ENCODE measurements at regions of chr19 and their contacts with region 1.

Region 1: DNA sequence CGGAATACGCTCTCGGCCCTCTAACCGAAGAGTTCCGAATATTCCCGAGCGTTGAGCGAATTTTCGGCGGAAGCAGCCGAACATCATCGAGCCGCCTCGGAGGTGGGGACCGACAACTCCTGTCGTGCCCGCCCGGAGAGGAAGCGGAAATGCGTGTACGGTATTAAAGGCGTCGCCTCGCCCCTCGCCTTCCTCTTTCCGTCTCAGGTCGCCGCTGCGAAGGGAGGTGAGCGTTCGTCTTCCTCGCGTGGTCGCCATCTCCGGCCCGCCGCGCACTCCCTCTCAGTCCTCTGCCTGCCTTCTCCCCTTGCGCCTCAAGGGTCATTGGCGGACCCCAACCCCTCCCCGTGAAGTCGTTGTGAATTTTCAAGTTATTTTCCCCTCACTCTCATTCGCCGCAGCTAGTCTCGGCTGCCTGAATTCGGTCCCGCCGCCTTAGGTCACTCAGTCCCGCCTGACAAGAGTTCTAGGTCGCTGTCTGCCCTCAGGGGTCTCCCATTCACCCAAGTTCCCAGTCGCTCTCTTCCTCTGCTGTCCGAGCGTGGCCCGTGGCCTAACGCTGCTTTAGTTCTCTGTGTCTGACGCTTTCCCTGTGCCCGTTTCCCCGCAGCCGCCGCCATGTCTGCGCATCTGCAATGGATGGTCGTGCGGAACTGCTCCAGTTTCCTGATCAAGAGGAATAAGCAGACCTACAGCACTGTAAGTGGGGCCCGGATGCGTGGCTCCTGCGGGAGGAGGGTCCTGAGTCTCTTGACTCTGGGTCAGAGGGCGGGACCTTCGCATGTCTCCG is at the start of gene RPL28:
- DNase-seq: peak; percentile 98 to 99
- ATAC-seq: peak; percentile 79 to 93 (median 84)
- H3K4me3 ChIP-seq: peak within 1 kb of the TSS; percentile 72
- H3K4me3 Mint-ChIP-seq: peak within 1 kb of the TSS; percentile 97
- H3K27ac ChIP-seq: peak within 1 kb of the TSS; percentile 94
- H3K27ac Mint-ChIP-seq: peak within 1 kb of the TSS; percentile 94 to 100
- H3K4me1 ChIP-seq: peaks cover 63% of the 10 kb centered on the region
- H3K4me1 Mint-ChIP-seq: peaks cover 54 to 79% of the 10 kb centered on the region in 2 donors
- H3K27me3 ChIP-seq: no peaks in the 10 kb centered on the region
- H3K27me3 Mint-ChIP-seq: no peaks in the 10 kb centered on the region
- CTCF ChIP-seq: no peak
- total RNA-seq, gene RPL28: 1,373 to 1,704 (median 1,679) TPM

Region 2: GRCh38 chr19:55228015-55228391 is 157.9 kb before region 1 on chr19:
- intact Hi-C with region 1: no loop called
- DNase-seq: no peak
- ATAC-seq: no peak
- H3K4me3 ChIP-seq: no peak overlapping the region
- H3K4me3 Mint-ChIP-seq: no peak overlapping the region
- H3K27ac ChIP-seq: no peak overlapping the region
- H3K27ac Mint-ChIP-seq: peak overlapping the region; percentile 29 to 65
- H3K4me1 ChIP-seq: no peaks in the 10 kb centered on the region
- H3K4me1 Mint-ChIP-seq: peaks cover 0 to 11% of the 10 kb centered on the region in 2 donors
- H3K27me3 ChIP-seq: no peaks in the 10 kb centered on the region
- H3K27me3 Mint-ChIP-seq: no peaks in the 10 kb centered on the region
- CTCF ChIP-seq: no peak

Region 3: DNA sequence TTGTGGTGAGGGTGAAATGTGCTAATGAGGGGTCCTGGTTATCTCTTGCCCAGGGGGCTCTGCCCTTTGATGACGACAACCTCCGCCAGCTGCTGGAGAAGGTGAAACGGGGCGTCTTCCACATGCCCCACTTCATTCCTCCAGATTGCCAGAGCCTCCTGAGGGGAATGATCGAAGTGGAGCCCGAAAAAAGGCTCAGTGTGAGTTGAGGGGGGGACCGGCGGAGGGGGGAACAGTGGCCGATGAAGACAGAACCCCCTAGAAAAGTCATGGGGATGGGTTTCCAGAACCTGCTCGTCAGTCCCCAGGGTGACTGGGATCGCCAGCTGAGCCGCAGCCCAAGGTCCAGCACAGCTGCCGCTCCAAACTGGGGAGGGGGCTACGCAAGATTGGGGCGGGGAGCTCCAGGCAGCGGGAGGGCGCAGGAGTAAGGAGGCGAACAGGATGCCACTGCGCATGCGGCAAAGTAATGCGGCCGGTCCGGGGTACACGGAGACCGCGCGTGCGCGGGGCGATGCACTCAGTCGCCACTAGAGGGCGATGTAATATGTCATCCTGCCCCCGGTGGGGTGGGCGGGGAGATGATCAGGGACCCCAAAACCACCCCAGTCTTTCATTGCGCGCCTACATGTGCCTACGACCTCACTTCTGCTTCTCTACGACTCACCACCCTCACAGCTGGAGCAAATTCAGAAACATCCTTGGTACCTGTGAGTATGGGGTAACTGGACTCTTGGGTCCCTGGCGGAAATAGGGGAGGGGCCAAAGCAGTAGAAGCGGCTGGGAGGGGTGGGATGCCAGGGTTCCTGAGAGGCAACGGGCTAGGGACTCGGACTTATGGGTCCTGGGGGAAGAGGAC is 84.2 kb before region 1 on chr19:
- intact Hi-C with region 1: loop called (anchors 2 kb)
- DNase-seq: peak; percentile 96
- ATAC-seq: peak; percentile 93 to 95 (median 94)
- H3K4me3 ChIP-seq: peak overlapping the region; percentile 35
- H3K4me3 Mint-ChIP-seq: peak overlapping the region; percentile 84
- H3K27ac ChIP-seq: peak overlapping the region; percentile 46
- H3K27ac Mint-ChIP-seq: peak overlapping the region; percentile 75 to 92
- H3K4me1 ChIP-seq: peaks cover 15% of the 10 kb centered on the region
- H3K4me1 Mint-ChIP-seq: peaks cover 0 to 13% of the 10 kb centered on the region in 2 donors
- H3K27me3 ChIP-seq: no peaks in the 10 kb centered on the region
- H3K27me3 Mint-ChIP-seq: no peaks in the 10 kb centered on the region
- CTCF ChIP-seq: peak; percentile 90

Region 4: DNA sequence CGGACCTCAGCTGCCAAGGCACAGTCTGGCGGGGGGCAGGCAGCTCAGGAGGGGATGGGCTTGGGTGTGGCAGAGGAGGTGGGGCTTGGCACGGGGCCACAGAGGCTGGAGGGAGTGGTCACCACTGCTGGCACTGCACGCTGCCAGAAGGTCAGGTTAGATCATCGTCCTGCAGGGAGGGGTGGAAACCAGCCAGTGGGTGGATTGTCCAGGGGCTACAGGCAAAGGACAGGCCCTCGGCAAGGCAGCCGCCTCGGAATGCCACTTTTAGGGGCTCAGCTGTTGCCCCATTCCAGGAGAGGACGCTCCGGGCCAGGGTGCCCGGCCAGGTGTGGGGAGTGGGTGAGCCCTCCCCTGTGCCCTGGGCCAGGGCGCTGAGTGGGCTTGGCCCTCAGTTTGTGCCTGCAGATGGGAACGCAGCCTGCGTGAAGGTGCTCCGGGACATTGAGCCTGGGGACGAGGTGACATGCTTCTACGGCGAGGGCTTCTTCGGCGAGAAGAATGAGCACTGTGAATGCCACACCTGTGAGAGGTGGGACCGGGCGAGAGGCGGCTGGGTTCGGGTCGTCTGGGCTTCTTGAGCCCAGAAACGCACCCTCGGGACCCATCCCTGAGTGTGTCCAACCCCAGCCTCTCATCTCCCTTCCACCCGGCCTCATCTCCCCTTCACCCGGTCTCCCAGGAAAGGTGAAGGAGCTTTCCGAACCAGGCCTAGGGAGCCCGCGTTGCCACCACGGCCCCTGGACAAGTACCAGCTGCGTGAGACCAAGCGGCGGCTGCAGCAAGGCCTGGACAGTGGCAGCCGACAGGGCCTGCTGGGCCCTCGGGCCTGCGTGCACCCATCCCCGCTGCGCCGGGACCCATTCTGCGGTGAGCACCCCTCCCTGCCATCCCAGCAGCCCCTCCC is 39.9 kb before region 1 on chr19:
- intact Hi-C with region 1: no loop called
- DNase-seq: no peak
- ATAC-seq: no peak
- H3K4me3 ChIP-seq: no peak overlapping the region
- H3K4me3 Mint-ChIP-seq: no peak overlapping the region
- H3K27ac ChIP-seq: no peak overlapping the region
- H3K27ac Mint-ChIP-seq: peak overlapping the region in 1 of 2 donors; percentile 2
- H3K4me1 ChIP-seq: peaks cover 7% of the 10 kb centered on the region
- H3K4me1 Mint-ChIP-seq: peaks cover 6 to 16% of the 10 kb centered on the region in 2 donors
- H3K27me3 ChIP-seq: no peaks in the 10 kb centered on the region
- H3K27me3 Mint-ChIP-seq: peaks cover under 1 to 2% of the 10 kb centered on the region in 2 donors
- CTCF ChIP-seq: no peak

Region 5: GRCh38 chr19:55407800-55408532 is 22.0 kb after region 1 on chr19:
- intact Hi-C with region 1: loop called (anchors 2 kb)
- DNase-seq: peak; percentile 96 to 99
- ATAC-seq: peak; percentile 85 to 93 (median 88)
- H3K4me3 ChIP-seq: peak overlapping the region; percentile 57
- H3K4me3 Mint-ChIP-seq: peak overlapping the region; percentile 98
- H3K27ac ChIP-seq: peak overlapping the region; percentile 99
- H3K27ac Mint-ChIP-seq: peak overlapping the region; percentile 99 to 100
- H3K4me1 ChIP-seq: peaks cover 24% of the 10 kb centered on the region
- H3K4me1 Mint-ChIP-seq: peaks cover 29 to 33% of the 10 kb centered on the region in 2 donors
- H3K27me3 ChIP-seq: no peaks in the 10 kb centered on the region
- H3K27me3 Mint-ChIP-seq: no peaks in the 10 kb centered on the region
- CTCF ChIP-seq: no peak

Measured in natural killer cell (primary cell).